ENCODE measurements at regions of chr3 and their contacts with region 1.

Region 1: DNA sequence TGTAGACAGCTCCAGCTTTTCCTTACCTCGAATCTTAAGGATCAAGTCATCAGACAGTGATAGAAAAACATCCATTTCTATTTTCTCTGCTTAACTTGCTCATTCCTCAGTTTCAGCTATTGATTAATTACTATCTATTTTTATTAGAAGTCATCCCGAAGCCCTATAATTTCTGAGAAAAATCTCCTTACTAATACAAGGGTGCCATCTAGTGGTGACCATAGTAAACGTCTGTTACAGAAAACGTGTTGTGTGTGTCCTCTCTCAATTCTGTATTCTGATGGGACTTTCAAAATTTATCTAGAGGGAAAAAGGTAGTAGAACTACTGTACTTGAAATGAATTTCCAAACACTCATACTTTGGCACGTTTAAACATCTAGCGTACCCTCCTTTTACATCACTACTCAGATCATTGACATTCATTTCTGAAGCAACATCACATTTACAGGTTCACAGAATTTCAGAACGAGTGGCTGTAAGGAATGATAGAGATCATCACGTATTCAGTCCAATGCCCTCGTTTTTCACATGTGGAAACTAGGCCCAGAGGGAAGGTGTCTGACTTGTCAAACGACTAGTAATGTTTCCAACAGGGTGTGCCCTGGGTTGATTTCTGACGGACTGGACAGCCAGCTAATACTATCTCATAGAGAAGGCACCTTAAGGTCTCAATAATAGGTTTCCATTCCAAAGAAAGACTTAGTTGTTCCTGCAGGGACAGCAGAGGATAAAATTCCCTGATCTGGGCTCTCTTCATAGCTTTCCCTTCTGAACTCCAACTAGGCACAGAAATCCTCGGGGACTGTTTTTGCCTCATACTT is 25.6 kb downstream of the HACD2 start:
- DNase-seq: peak; percentile 54
- H3K4me3 ChIP-seq: peak overlapping the region in 1 of 2 experiments; percentile 24; a peak in 1 of 4 replicates
- H3K27ac ChIP-seq: no peak overlapping the region
- H3K4me1 ChIP-seq: no peaks in the 10 kb centered on the region; a peak in 1 of 4 replicates
- H3K27me3 ChIP-seq: no peaks in the 10 kb centered on the region
- CTCF ChIP-seq: peak; percentile 90
- EP300 ChIP-seq: no peak
- RAD21 ChIP-seq: peak; percentile 81

Region 2: DNA sequence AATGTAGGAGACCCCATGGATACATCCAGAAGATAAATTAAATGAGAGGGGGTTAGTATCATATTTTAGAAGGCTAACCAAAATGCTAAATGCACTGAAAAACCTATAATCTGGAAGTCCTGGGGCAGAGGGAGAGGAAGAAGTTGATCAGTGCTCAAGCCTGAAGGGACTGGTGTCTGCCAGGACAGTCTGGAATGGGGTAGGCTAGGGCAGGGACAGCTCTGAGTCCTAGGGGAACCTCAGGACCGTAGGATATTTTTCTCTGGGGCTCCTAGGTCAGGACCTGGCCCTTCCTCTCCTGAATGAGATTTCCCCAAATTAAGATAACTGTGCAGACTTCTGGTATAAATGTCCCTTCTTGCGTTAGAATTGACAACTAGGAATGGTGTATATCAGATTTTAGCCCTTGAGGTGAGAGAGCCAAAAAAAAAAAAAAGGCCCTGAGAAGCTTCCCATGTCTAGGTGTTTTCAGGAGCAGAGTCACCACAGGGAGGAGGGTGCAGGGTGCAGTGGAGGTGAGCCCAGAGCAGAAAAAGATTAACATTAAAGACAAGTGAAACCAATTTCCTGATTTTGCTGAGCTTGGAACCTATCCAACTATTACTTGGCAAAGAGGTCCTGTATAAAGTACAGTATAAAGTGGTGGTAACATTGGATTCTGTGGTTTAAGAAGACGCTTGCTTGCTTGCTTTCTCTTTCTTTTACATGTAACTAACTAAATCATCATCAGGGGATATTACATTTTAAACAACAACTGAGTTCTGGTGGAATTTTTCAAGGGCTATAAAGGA is 37.9 kb before region 1 on chr3:
- CTCF ChIA-PET with region 1: interaction called, 20 read pairs
- POLR2A ChIA-PET with region 1: no interaction called
- DNase-seq: no peak
- H3K4me3 ChIP-seq: no peak overlapping the region
- H3K27ac ChIP-seq: no peak overlapping the region
- H3K4me1 ChIP-seq: peaks cover 6 to 8% of the 10 kb centered on the region in 2 experiments; a peak in 2 of 4 replicates
- H3K27me3 ChIP-seq: no peaks in the 10 kb centered on the region
- CTCF ChIP-seq: no peak
- EP300 ChIP-seq: no peak
- RAD21 ChIP-seq: no peak

Region 3: GRCh38 chr3:123543950-123544349 is 15.3 kb before region 1 on chr3:
- CTCF ChIA-PET with region 1: interaction called, 40 read pairs
- POLR2A ChIA-PET with region 1: no interaction called
- DNase-seq: no peak
- H3K4me3 ChIP-seq: no peak overlapping the region
- H3K27ac ChIP-seq: no peak overlapping the region
- H3K4me1 ChIP-seq: peaks cover 0 to 6% of the 10 kb centered on the region in 2 experiments; a peak in 1 of 4 replicates
- H3K27me3 ChIP-seq: no peaks in the 10 kb centered on the region
- CTCF ChIP-seq: no peak
- EP300 ChIP-seq: no peak
- RAD21 ChIP-seq: no peak

Region 4: GRCh38 chr3:123576122-123576521 is 16.9 kb after region 1 on chr3:
- CTCF ChIA-PET with region 1: interaction called, 46 read pairs
- POLR2A ChIA-PET with region 1: no interaction called
- DNase-seq: no peak
- H3K4me3 ChIP-seq: no peak overlapping the region
- H3K27ac ChIP-seq: no peak overlapping the region
- H3K4me1 ChIP-seq: no peaks in the 10 kb centered on the region; a peak in 1 of 4 replicates
- H3K27me3 ChIP-seq: no peaks in the 10 kb centered on the region
- CTCF ChIP-seq: no peak
- EP300 ChIP-seq: no peak
- RAD21 ChIP-seq: no peak

Region 5: DNA sequence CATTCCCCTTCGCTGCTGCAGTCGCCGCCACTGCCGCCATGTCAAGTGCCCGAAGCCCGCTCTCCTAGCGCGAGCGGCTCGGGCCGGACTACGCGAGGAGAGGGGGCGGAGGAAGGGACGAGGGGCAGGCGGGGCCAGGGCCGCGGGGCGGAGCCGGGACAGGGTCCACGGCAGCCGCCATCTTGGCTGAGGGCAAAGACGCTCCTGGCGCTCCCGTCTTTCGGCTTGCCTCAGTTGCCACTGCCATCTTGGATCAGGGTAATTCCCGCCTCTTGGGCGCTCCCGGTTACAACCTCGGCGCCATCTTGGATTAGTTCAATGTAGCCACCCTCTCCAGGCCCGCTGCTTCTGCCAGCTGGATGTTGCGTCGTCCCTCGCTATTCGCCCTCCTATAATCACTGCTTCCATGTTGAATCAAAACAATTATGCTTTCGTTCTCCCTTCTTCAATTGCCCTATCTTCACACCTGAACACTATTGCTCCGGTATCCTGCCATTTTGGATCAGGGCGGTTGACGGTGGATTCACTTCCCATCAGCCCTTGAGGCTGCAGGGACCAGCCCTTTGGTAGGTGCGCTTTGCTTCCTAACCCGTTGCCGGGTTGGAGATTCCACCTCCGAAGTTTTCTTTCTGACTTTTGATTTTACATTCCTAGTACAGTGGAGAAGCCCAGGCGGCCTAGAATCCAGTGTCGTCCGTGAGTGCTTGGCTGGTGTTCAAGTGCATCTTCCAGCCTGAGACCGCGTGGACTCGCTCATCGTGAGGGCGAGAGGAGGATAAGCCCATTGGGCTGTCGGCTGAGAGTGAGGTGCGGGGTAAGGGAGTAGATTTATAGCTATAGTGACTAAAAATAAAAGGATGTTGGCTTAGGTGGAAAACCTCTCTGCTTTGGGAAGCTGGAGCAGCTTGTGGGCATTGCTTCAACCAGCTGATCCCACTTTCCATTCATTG is 26.0 kb after region 1 on chr3 and contains the start of gene HACD2:
- CTCF ChIA-PET with region 1: interaction called, 29 read pairs
- POLR2A ChIA-PET with region 1: no interaction called
- DNase-seq: peak; percentile 96
- H3K4me3 ChIP-seq: peak within 1 kb of the TSS; percentile 78 to 93
- H3K27ac ChIP-seq: peak within 1 kb of the TSS; percentile 94 to 100
- H3K4me1 ChIP-seq: peaks cover 4 to 9% of the 10 kb centered on the region in 2 experiments; a peak in 3 of 4 replicates
- H3K27me3 ChIP-seq: no peaks in the 10 kb centered on the region
- CTCF ChIP-seq: no peak
- EP300 ChIP-seq: no peak; a peak in 1 of 4 replicates
- RAD21 ChIP-seq: no peak
- polyA plus RNA-seq, gene HACD2: 13.8 and 18.3 TPM in 2 replicates

Region 6: GRCh38 chr3:123610331-123610730 is 51.1 kb after region 1 on chr3:
- CTCF ChIA-PET with region 1: no interaction called
- POLR2A ChIA-PET with region 1: no interaction called
- DNase-seq: no peak
- H3K4me3 ChIP-seq: no peak overlapping the region
- H3K27ac ChIP-seq: no peak overlapping the region; a peak in 1 of 4 replicates
- H3K4me1 ChIP-seq: peaks cover 0 to 7% of the 10 kb centered on the region in 2 experiments; a peak in 2 of 4 replicates
- H3K27me3 ChIP-seq: no peaks in the 10 kb centered on the region
- CTCF ChIP-seq: no peak
- EP300 ChIP-seq: no peak
- RAD21 ChIP-seq: no peak

Measured in SK-N-SH (cell line).